Mammary epithelial cell (primary cell): ENCODE measurements at regions of chr3 and their contacts with region 1.

Region 1: GRCh38 chr3:185332026-185332735 is 30.8 kb upstream of the MAP3K13 start:
- DNase-seq: peak; percentile 92
- H3K4me3 ChIP-seq: no peak overlapping the region
- H3K27ac ChIP-seq: peak overlapping the region; percentile 52
- H3K4me1 ChIP-seq: peaks cover 18% of the 10 kb centered on the region
- H3K27me3 ChIP-seq: no peaks in the 10 kb centered on the region
- CTCF ChIP-seq: no peak

Region 2: GRCh38 chr3:185552358-185552877 is 220.2 kb after region 1 on chr3 and contains the start of gene LIPH:
- CTCF ChIA-PET with region 1: no interaction called
- dilution Hi-C with region 1: no loop called
- in situ Hi-C with region 1: loop called in 1 of 2 experiments (anchors 25 kb)
- intact Hi-C with region 1: no loop called
- DNase-seq: peak; percentile 66
- H3K4me3 ChIP-seq: no peak within 1 kb of the TSS
- H3K27ac ChIP-seq: no peak within 1 kb of the TSS
- H3K4me1 ChIP-seq: peaks cover 13% of the 10 kb centered on the region
- H3K27me3 ChIP-seq: no peaks in the 10 kb centered on the region
- CTCF ChIP-seq: no peak
- total RNA-seq, gene LIPH: 0.38 to 0.50 TPM